Tibial artery (tissue), 4 donors: ENCODE measurements at regions of chr9 and their contacts with region 1.

Region 1: GRCh38 chr9:111068771-111069170 is 30.5 kb upstream of the LPAR1 start:
- DNase-seq: no peak
- H3K4me3 ChIP-seq: no peak overlapping the region
- H3K27ac ChIP-seq: peak overlapping the region; percentile 26 to 53
- H3K4me1 ChIP-seq: no peaks in the 10 kb centered on the region
- H3K27me3 ChIP-seq: no peaks in the 10 kb centered on the region
- CTCF ChIP-seq: no peak

Region 2: DNA sequence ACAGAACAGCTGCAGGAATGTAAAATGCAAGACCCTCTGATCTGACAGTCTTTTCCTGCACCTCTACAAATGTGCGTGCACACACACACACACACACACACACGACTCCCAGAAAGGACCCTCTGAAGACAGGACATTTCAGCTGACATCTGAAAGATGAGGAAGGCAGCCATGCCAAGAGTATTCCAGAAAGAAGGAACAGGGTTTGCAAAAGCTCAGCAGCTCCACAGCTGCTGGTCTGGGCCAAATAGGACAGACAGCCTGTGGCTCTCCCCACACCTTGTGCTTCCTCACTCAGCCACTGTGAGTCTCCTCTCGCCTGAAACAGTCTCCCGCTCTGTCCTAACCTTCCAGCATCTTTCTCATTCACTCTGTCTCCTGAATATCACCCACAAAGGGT is 1099.8 kb before region 1 on chr9:
- intact Hi-C with region 1: loop called (anchors 10 kb)
- DNase-seq: no peak
- H3K4me3 ChIP-seq: no peak overlapping the region
- H3K27ac ChIP-seq: no peak overlapping the region
- H3K4me1 ChIP-seq: peaks cover 0 to 27% (median 7%) of the 10 kb centered on the region in 4 donors
- H3K27me3 ChIP-seq: no peaks in the 10 kb centered on the region
- CTCF ChIP-seq: no peak

Region 3: DNA sequence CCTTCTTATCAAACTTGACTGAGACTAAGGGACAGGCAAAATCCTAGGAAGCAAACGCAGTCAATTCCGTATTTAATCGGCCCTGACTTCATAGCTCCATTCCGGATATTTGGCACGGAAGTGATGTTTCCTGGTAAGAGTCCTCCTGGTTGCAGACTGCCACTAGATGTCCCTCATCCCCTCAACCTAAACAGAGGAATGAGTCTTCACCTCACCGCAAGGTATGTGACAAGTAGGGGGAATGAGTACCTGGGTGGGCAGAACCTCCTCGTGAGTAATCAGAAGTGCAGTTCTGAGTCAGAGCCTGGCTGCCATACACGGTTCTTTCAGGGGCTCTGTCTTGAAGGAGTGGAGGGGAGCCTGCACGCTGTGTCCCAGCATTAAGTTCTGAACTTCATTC is 226.6 kb before region 1 on chr9:
- intact Hi-C with region 1: no loop called
- DNase-seq: no peak
- H3K4me3 ChIP-seq: no peak overlapping the region
- H3K27ac ChIP-seq: no peak overlapping the region
- H3K4me1 ChIP-seq: peaks cover 0 to 8% (median under 1%) of the 10 kb centered on the region in 4 donors
- H3K27me3 ChIP-seq: no peaks in the 10 kb centered on the region
- CTCF ChIP-seq: no peak

Region 4: GRCh38 chr9:111271481-111272080 is 202.8 kb after region 1 on chr9:
- intact Hi-C with region 1: no loop called
- DNase-seq: no peak
- H3K4me3 ChIP-seq: no peak overlapping the region
- H3K27ac ChIP-seq: no peak overlapping the region
- H3K4me1 ChIP-seq: no peaks in the 10 kb centered on the region
- H3K27me3 ChIP-seq: no peaks in the 10 kb centered on the region
- CTCF ChIP-seq: no peak